HepG2 (cell line): ENCODE measurements at regions of chr9 and their contacts with region 1.

Region 1: GRCh38 chr9:137445275-137445807 is 4.2 kb upstream of the ENTPD8 start:
- DNase-seq: peak; percentile 57
- ATAC-seq: peak; percentile 38
- H3K4me3 ChIP-seq: no peak overlapping the region
- H3K27ac ChIP-seq: no peak overlapping the region
- H3K4me1 ChIP-seq: peaks cover 25% of the 10 kb centered on the region
- H3K27me3 ChIP-seq: no peaks in the 10 kb centered on the region
- CTCF ChIP-seq: peak; percentile 84
- EP300 ChIP-seq: no peak
- POLR2A ChIP-seq: peak in 1 of 2 experiments; percentile 39; a peak in 1 of 4 replicates
- RAD21 ChIP-seq: peak; percentile 47; the same call in 1 of the 2 replicates

Region 2: DNA sequence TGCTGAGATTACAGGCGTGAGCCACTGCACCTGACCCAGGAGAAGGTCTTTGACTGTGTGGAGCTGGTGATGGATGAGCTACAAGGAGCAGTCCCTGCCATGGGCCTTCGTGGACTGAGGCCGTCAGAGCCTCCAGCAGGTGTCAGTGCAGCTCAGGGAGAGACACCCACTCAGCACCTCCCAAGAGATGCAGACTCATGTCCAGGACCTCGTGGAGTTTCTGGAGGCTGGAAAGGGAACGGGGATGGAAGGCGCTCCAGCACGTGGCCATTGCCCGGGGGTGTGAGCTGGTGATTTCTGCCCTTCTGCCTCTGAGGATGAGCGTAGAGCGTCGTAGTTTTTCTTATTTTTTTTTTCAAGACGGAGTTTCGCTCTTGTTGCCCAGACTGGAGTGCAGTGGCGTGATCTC is 158.4 kb before region 1 on chr9:
- CTCF ChIA-PET with region 1: interaction called, 6 read pairs
- POLR2A ChIA-PET with region 1: no interaction called
- in situ Hi-C with region 1: no loop called
- intact Hi-C with region 1: loop called (anchors 5 kb)
- DNase-seq: peak; percentile 68
- ATAC-seq: peak; percentile 98
- H3K4me3 ChIP-seq: no peak overlapping the region
- H3K27ac ChIP-seq: no peak overlapping the region
- H3K4me1 ChIP-seq: peaks cover 13% of the 10 kb centered on the region
- H3K27me3 ChIP-seq: no peaks in the 10 kb centered on the region
- CTCF ChIP-seq: peak; percentile 92
- EP300 ChIP-seq: no peak
- POLR2A ChIP-seq: no peak
- RAD21 ChIP-seq: peak; percentile 84

Region 3: DNA sequence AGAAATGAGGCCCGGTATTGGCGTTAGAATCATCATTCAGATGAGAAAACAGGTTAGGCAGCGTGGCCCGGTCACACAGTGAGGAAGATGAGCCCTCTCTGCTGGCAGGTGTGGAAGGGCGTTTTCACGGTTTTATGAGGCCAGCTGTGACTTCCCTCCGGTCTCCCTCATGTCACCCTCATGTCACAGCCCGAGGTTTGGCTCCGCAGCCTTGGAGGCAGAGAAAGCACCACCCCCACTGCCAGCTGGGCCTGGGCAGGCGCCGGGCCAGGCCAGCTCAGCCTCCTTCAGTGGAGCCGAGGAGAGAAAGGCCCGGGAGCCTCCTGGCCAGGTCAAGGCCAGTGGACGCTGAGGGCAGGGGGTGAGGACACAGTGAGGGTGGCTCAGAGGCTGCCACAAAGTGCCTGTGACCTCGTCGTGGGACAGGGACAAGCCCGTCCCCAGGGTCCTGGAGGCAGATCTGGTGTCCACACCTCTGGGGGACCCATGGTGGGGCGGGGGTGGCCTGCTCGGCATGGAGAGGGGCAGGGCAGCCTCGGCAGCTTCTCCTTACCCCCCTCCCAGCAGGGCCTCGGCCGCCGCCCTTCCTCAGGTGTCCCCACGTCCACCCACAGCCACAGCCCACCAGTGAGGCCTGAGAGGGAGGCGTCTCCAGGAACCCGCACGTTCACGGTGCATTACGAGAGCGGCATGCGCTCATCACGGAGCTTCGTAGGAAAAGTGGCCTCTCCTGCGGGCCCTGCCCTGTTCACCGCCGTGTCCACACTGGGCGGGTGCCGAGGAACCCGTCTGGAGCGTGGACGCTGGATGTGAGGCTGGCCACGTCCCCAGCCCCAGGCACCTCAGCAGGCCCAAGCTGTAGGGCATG is 54.6 kb before region 1 on chr9:
- CTCF ChIA-PET with region 1: no interaction called
- POLR2A ChIA-PET with region 1: no interaction called
- in situ Hi-C with region 1: no loop called
- intact Hi-C with region 1: no loop called
- DNase-seq: no peak
- ATAC-seq: no peak
- H3K4me3 ChIP-seq: no peak overlapping the region
- H3K27ac ChIP-seq: no peak overlapping the region
- H3K4me1 ChIP-seq: peaks cover 24% of the 10 kb centered on the region
- H3K27me3 ChIP-seq: no peaks in the 10 kb centered on the region
- CTCF ChIP-seq: no peak
- EP300 ChIP-seq: no peak
- POLR2A ChIP-seq: no peak
- RAD21 ChIP-seq: no peak

Region 4: DNA sequence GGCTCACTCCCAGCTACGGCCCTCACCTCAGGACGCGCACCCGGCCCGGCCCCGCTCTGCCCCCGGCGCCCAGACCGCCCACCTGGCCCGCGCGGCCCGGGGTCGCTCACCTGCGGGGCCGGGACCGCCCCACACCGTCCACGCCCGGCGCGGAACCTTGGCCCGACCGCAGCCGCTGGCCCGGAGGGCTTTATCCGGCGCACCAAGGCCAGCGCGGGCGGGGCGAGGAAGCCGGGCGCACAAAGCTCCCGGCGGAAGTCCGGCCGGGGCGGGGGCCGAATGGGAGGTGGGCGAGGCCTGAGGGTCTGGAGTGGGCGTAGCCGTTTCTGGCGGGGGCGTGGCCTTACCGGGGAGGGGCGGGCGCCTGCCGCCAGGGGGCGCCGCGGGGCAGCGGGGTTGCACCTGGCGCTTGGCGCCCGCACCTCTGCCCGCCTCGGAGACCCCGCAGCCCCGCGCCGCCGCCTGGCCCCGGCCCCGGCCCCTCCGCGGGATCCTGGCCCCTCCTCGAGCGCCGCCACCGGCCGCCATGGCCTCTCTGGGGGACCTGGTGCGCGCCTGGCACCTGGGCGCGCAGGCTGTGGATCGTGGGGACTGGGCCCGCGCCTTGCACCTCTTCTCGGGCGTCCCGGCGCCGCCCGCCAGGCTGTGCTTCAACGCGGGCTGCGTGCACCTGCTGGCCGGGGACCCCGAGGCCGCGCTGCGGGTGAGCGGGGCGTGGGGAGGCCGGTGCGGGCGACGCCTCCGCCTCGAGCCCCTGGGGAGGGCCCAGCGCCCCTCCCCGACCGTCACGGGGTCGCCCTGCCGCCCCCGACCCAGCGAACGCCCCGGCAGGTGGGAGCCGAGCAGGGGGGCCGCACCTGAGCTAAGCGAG is 22.1 kb before region 1 on chr9 and contains the starts of genes EXD3 and NOXA1:
- CTCF ChIA-PET with region 1: interaction called, 23 read pairs
- POLR2A ChIA-PET with region 1: interaction called, 26 read pairs
- in situ Hi-C with region 1: no loop called
- intact Hi-C with region 1: loop called (anchors 1 kb)
- DNase-seq: peak; percentile 81
- ATAC-seq: peak; percentile 81
- H3K4me3 ChIP-seq: peak within 1 kb of the TSS; percentile 69 to 99 (median 96)
- H3K27ac ChIP-seq: peak within 1 kb of the TSS; percentile 69
- H3K4me1 ChIP-seq: peaks cover 21% of the 10 kb centered on the region
- H3K27me3 ChIP-seq: no peaks in the 10 kb centered on the region; a peak in 1 of 5 replicates
- CTCF ChIP-seq: peak; percentile 71
- EP300 ChIP-seq: no peak; a peak in 1 of 4 replicates
- POLR2A ChIP-seq: no peak
- RAD21 ChIP-seq: peak; percentile 87
- total RNA-seq, gene EXD3: 1.3 and 2.7 TPM in 2 replicates
- total RNA-seq, gene NOXA1: 0.63 and 1.2 TPM in 2 replicates